Activated CD8-positive, alpha-beta memory T cell treated with anti-CD3 and anti-CD28 coated beads, Interleukin-2, amount 10 ng/mL, durations not matched to agents 7 days and 5 days (primary cell): ENCODE measurements at regions of chr5 and their contacts with region 1.

Region 1: GRCh38 chr5:141564216-141564692 is 54.5 kb downstream of the DIAPH1 start:
- DNase-seq: peak; percentile 79
- ATAC-seq: peak; percentile 95
- H3K4me3 Mint-ChIP-seq: no peak overlapping the region
- H3K27ac Mint-ChIP-seq: peak overlapping the region; percentile 85
- H3K4me1 Mint-ChIP-seq: peaks cover 24% of the 10 kb centered on the region
- H3K27me3 Mint-ChIP-seq: no peaks in the 10 kb centered on the region

Region 2: GRCh38 chr5:141320225-141321169 is 243.8 kb before region 1 on chr5 and contains the start of gene TAF7:
- CTCF ChIA-PET with region 1: interaction called, 17 read pairs
- DNase-seq: peak; percentile 95
- ATAC-seq: peak; percentile 95
- H3K4me3 Mint-ChIP-seq: peak within 1 kb of the TSS; percentile 97
- H3K27ac Mint-ChIP-seq: peak within 1 kb of the TSS; percentile 100
- H3K4me1 Mint-ChIP-seq: peaks cover 32% of the 10 kb centered on the region
- H3K27me3 Mint-ChIP-seq: no peaks in the 10 kb centered on the region
- total RNA-seq, gene TAF7: 57.3 to 64.6 TPM

Region 3: DNA sequence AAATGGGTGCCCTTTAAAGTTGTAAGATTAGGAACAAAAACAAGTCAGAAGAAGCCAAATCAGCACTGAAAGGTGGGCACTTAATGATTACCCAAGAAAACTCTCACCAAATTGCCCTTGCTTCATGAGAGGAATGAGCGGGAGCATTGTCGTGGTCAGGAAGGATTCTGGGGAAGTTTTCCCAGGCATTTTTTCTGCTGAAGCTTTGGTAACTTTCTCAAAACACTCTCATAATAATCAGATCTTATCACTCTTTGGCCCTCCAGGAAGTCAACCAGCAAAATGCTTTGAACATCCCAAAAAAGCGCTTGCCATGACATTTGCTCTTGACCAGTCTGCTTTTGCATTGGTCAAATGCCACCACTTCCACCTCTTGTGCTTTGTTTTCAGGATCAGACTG is 98.9 kb before region 1 on chr5:
- CTCF ChIA-PET with region 1: no interaction called
- DNase-seq: no peak
- ATAC-seq: no peak
- H3K4me3 Mint-ChIP-seq: no peak overlapping the region
- H3K27ac Mint-ChIP-seq: no peak overlapping the region
- H3K4me1 Mint-ChIP-seq: no peaks in the 10 kb centered on the region
- H3K27me3 Mint-ChIP-seq: peaks cover 3% of the 10 kb centered on the region

Region 4: DNA sequence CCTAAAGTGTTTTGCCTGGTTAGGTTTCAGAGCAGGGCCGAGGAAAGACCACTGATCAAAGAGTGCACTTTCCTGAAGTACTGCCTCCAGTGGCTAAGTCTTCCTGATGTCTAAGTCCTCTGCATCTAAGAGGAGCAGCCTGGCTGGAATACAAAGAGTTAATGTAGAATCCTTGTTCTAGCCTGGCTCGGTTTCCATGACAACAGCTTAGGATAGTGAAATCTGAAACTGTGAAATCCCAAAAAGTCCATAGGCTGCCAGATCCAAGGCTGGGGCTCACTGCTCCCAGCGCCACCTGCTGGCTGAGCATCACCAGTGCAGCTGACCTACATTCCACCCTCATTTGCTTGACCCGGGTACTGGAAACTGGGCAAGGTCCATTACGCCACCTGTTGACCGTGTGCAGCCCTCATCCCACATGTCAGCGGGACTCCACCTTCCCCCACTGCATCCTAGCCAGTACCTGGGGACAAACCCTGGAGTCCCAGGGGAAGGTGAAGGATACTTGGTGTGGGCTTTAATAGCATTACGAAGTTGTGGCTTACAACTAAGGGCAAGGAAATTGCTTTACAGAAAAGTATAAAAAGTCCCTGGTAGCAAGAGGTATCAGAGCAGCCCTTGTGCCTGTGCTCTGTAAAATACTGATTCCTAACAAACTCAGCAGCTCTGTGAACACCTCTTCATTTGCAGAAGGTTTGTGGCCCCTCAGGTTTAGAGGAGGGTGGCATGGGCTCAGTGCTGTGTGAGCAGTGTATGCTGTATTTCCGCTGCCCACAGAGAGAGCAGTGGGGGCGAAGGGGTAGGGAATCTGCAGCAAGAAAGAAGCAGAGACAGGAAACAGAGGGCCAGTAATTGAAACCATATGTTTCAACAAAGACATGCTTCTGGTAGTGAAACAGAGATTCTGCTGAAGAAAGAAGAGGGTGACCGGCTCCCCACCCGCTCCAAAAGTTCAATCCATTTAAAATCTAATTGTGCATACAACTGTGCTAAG is 39.4 kb before region 1 on chr5:
- CTCF ChIA-PET with region 1: interaction called, 14 read pairs
- DNase-seq: peak; percentile 56
- ATAC-seq: peak; percentile 67
- H3K4me3 Mint-ChIP-seq: no peak overlapping the region
- H3K27ac Mint-ChIP-seq: peak overlapping the region; percentile 41
- H3K4me1 Mint-ChIP-seq: peaks cover 28% of the 10 kb centered on the region
- H3K27me3 Mint-ChIP-seq: no peaks in the 10 kb centered on the region

Region 5: DNA sequence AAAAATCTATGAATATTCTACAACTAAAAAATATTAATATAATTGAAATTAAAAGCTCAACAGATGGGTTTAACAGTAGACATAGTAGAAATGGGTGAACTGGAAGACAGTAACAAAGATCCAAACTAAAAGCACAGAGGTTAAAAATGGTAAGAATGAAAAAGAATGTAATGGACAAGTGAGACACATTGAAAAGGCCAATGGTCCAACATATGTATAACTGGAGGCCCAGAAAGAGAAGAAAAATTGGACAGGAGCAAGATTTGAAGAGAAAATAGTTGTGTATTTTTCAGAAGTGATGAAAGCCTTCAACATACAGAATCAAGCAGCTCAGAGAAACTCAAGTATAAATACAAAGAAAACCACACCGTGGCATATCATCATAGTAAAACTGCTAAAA is 16.8 kb before region 1 on chr5:
- CTCF ChIA-PET with region 1: interaction called, 16 read pairs
- DNase-seq: no peak
- ATAC-seq: no peak
- H3K4me3 Mint-ChIP-seq: no peak overlapping the region
- H3K27ac Mint-ChIP-seq: no peak overlapping the region
- H3K4me1 Mint-ChIP-seq: no peaks in the 10 kb centered on the region
- H3K27me3 Mint-ChIP-seq: no peaks in the 10 kb centered on the region

Region 6: DNA sequence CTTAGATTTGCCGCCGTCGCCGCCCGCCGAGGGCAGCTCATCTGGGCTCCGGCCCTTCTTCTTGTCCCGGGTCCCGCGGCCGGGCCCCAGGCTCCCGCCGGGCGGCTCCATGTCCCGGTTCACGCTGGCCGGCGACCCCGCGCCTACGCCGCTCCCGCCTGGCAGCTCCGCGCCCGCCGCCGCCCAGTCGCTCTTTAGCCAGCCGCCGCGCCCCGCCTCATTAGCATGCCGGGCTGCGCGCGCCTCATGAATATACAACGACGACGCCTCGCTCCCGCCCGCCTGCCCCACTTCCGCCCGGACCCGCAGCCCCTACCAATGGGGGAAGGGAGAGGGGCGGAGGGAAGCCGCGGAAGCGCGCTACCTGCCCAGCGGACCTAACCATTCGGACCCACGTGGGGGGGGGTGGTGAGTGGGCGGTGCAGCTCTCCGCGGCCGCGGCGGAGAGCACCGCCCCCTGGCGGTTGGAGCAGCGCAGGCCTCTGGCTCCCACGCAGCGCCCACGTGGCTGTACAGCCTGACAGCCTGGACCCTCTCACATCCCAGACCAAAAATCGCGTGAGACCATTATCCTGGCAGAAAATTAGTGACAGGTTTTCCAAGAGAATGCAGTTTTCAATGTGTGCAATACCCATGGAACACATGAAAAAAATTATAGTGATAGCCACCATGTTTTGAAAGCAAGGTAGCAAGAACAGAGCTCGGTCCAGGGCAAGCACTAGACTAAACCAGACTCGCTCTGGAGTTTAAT is 54.7 kb after region 1 on chr5 and contains the start of gene DIAPH1:
- CTCF ChIA-PET with region 1: interaction called, 29 read pairs
- DNase-seq: peak; percentile 98
- ATAC-seq: peak; percentile 93
- H3K4me3 Mint-ChIP-seq: peak within 1 kb of the TSS; percentile 100
- H3K27ac Mint-ChIP-seq: peak within 1 kb of the TSS; percentile 98
- H3K4me1 Mint-ChIP-seq: peaks cover 55% of the 10 kb centered on the region
- H3K27me3 Mint-ChIP-seq: no peaks in the 10 kb centered on the region
- total RNA-seq, gene DIAPH1: 284 to 295 TPM